ENCODE measurements at regions of chr5 and their contacts with region 1.

Region 1: DNA sequence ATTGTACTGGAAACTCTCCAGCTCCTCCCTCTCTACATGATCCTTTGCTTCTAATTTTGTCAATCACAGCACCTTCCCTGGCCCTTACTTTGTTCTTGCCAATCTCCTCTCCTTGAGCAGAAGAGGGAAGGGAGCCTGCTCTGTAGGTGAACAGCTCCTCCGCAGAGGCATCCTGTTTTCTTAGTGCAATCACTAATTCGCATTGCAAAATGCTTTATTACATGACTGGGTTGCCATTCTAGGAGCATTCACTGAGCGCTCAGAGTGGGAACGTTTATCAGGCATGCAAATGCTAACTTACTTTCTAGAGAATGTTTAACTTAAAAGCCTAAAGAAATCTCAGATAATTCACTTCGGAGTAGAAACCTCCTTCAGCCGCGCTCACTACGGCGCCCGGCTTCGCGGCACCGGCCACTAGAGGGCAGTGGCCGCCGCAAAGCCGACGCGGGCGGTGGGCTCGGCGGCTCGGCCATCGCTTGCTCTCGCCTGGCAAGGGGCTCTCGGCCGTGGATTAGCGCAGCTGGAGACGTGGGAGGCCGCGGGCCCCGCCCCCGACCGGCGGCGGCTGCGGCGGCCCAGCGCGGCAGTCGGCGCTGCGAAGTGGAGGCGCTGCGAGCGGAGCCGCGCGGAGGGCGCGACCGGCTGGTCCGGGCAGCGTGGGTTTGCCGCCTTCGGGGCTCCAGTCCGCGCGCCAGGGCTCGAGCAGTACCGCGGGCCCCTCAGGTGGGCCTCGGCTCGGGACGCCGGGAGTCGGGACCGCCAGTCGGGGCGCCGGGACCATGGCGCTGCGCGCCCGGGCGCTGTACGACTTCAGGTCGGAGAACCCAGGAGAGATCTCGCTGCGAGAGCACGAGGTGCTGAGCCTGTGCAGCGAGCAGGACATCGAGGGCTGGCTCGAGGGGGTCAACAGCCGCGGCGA is at the start of gene SNX18:
- DNase-seq: peak; percentile 90
- H3K4me3 Mint-ChIP-seq: peak within 1 kb of the TSS; percentile 86
- H3K27ac Mint-ChIP-seq: peak within 1 kb of the TSS; percentile 76
- H3K4me1 Mint-ChIP-seq: peaks cover 42% of the 10 kb centered on the region
- H3K27me3 Mint-ChIP-seq: peaks cover 20% of the 10 kb centered on the region
- total RNA-seq, gene SNX18: 25.4 and 27.9 TPM in 2 replicates

Region 2: GRCh38 chr5:54457094-54457862 is 60.2 kb before region 1 on chr5:
- intact Hi-C with region 1: no loop called
- DNase-seq: no peak
- H3K4me3 Mint-ChIP-seq: no peak overlapping the region
- H3K27ac Mint-ChIP-seq: no peak overlapping the region
- H3K4me1 Mint-ChIP-seq: no peaks in the 10 kb centered on the region
- H3K27me3 Mint-ChIP-seq: peaks cover 18% of the 10 kb centered on the region

Region 3: DNA sequence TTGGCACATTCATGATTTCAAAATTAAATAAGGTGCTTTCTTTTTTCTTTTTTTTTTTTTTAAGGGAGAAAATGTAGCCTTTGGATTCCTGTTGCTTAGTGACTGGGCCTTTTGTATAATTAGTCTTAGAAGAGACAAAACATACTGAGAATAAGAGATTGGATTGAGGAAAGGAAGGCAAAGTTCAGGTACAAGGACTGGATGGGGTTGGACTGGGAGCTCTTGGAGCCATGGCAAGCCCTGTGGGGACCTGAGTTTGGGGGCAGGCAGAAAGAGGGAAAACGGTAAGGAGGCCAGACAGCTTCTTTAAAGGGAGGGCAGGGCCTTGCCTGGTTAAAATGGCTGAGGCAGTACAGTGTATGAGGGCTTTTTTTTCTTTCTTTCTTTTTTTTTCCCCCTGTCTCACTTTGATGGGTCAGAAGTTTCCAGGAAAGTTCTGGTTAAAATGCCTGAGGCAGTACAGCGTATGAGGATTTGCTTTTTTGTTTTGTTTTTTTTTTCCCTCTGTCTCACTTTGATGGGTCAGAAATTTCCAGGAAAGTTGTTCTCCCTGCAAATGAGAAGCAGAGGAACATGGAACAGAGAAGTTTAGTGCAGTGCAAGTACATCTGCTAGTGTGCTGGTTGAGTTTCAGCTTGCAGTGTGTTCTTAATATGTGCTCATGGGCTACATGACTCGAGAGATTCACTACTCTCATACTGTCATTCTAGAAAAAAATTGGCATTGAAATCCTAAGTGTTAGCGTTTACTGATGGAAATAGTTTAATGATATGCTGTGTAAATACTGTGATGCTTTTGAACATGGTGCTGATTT is 17.0 kb after region 1 on chr5:
- intact Hi-C with region 1: no loop called
- DNase-seq: no peak
- H3K4me3 Mint-ChIP-seq: no peak overlapping the region
- H3K27ac Mint-ChIP-seq: peak overlapping the region; percentile 23
- H3K4me1 Mint-ChIP-seq: peaks cover 41% of the 10 kb centered on the region
- H3K27me3 Mint-ChIP-seq: no peaks in the 10 kb centered on the region

Region 4: GRCh38 chr5:54610197-54610944 is 92.9 kb after region 1 on chr5:
- intact Hi-C with region 1: loop called (anchors 1 kb)
- DNase-seq: peak; percentile 41
- H3K4me3 Mint-ChIP-seq: peak overlapping the region; percentile 68
- H3K27ac Mint-ChIP-seq: peak overlapping the region; percentile 92
- H3K4me1 Mint-ChIP-seq: peaks cover 27% of the 10 kb centered on the region
- H3K27me3 Mint-ChIP-seq: peaks cover 3% of the 10 kb centered on the region

Region 5: DNA sequence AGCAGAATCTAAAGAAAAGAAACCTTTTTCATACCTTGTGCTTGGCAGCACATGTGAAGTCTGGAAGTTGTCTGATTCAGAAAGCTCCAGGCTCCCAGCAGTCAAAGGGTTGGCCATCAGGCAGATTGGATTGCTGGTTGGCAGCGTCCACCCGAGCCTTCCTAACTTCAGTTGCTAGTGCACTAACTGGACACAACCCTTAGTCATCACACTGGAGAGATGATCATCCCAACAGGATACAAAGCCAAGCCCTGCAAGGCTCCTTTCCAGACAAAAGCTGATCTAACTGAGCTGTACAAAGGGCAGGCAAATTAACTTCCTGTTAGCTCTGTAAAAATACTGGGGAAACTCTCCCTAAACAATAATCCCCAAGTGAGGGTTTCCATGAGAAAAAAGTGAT is 185.7 kb after region 1 on chr5:
- intact Hi-C with region 1: no loop called
- DNase-seq: no peak
- H3K4me3 Mint-ChIP-seq: no peak overlapping the region
- H3K27ac Mint-ChIP-seq: no peak overlapping the region
- H3K4me1 Mint-ChIP-seq: peaks cover 31% of the 10 kb centered on the region
- H3K27me3 Mint-ChIP-seq: peaks cover 10% of the 10 kb centered on the region

Region 6: DNA sequence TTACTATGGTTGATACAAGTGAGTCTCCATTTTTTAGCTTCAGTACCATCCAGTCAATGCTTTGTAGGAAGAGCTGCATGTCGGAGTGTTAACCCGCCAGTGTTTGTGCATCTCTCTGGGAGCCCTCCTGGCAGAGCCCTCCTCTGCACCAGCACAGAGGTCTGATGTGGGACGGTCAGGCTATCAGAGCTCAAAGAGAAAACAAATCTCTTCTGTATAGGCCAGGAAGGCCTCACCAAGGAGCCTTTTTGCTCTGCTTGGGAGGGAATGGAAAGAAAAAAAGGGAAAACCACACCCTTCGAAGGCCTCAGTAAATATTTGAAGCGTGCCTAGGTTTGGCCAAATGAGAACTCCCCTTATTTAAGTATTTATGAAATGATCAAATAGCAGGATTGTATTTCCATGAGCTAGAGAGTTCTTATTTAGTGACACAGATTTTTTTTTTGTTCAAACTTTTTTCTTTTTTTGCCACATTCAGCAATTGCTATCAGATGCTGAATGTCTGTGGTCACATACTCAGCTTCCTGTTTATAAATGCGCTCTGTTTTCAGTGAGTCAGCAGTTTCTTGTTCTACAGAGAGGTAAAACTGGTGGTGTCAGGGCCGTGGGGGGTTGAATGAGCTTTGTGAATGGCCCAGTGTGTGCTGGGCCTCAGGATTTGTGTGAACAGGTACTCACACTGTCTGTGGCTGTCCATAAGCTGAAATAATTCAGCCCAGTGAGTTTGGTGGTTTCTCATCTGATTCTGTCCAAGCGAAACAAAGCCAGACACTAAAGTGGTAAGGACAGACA is 226.8 kb after region 1 on chr5:
- intact Hi-C with region 1: loop called (anchors 1 kb)
- DNase-seq: peak; percentile 63
- H3K4me3 Mint-ChIP-seq: peak overlapping the region; percentile 50
- H3K27ac Mint-ChIP-seq: peak overlapping the region; percentile 87
- H3K4me1 Mint-ChIP-seq: peaks cover 20% of the 10 kb centered on the region
- H3K27me3 Mint-ChIP-seq: no peaks in the 10 kb centered on the region

Region 7: DNA sequence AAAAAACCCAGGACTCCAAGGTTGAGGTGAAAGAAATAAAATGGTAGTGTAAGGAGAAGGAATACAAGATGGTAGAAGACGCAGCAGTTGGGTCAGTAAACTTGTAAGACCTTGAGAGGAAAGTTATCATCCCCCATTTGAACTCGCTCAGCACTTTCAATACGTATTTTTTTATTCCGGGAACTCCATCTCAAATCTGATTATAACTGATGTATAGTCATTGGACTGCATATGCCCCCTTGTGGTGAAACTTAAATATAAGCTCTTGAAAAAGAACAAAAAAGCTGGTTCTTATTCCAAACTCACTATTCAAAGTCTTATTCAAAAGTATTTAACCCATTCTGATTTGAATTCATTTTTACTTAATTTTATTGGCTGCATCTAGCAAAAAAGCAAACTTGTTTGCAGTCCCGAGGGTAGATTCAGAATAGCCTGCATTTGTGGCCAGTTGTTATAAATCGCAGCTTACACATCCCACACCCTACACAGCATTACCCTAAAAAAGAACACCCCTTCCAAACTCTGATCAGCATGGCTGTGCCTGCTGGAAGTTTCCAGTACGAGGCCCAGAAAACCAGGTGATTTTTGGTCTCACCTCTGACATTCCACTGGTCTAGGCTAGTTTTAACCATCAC is 350.0 kb after region 1 on chr5:
- intact Hi-C with region 1: loop called (anchors 1 kb)
- DNase-seq: no peak
- H3K4me3 Mint-ChIP-seq: no peak overlapping the region
- H3K27ac Mint-ChIP-seq: no peak overlapping the region
- H3K4me1 Mint-ChIP-seq: peaks cover 30% of the 10 kb centered on the region
- H3K27me3 Mint-ChIP-seq: peaks cover 67% of the 10 kb centered on the region

Region 8: DNA sequence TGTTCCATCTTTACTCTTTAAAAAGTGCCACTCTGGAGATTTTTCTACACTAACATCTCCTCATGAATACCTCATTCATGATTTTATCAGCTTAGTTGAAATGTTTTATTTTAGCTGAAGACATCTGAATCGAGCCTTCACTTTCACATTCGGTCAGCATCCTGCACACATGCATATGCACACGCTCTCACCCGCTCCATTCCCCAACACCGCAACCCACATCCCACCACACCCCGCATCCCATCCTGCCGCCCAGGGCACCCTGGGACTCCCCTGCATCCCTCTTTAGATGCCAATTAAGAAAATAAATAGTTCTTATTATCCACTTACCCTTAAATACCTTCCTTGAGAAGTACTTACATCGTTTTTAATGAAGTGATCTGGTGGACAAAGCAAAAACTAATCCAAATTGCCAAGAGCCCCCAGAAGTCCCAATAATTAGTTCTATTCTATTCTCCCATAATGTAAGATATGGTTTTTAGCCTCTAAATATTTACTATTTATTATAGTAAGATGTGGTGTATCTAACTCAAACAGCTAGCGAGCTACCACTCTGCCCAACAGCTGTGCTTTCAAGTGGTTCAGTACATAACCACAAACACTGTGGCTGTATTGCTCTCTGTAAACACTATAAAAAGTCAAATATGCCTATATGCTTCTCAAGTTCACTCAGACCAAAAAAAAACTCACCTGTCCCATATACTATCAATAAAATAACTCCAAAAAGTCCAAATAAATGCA is 544.8 kb after region 1 on chr5:
- intact Hi-C with region 1: loop called (anchors 10 kb)
- DNase-seq: peak; percentile 79
- H3K4me3 Mint-ChIP-seq: peak overlapping the region; percentile 79
- H3K27ac Mint-ChIP-seq: peak overlapping the region; percentile 98
- H3K4me1 Mint-ChIP-seq: peaks cover 83% of the 10 kb centered on the region
- H3K27me3 Mint-ChIP-seq: peaks cover 1% of the 10 kb centered on the region

Region 9: GRCh38 chr5:55172051-55172899 is 654.8 kb after region 1 on chr5:
- intact Hi-C with region 1: loop called (anchors 5 kb)
- DNase-seq: peak; percentile 61
- H3K4me3 Mint-ChIP-seq: peak overlapping the region; percentile 86
- H3K27ac Mint-ChIP-seq: no peak overlapping the region
- H3K4me1 Mint-ChIP-seq: peaks cover 46% of the 10 kb centered on the region
- H3K27me3 Mint-ChIP-seq: peaks cover 78% of the 10 kb centered on the region

Measured in activated T-helper 1 cell treated with anti-CD3 and anti-CD28 coated beads, Interleukin-12 subunit alpha, Interleukin-12 subunit beta, Interleukin-2, Interleukin-4 antibody, amounts not matched to agents 30 ng/mL and 10 ng/mL and 1 ng/mL, durations not matched to agents 14 hours and 24 hours and 36 hours (primary cell).